ENCODE measurements at regions of chr1 and their contacts with region 1.

Region 1: DNA sequence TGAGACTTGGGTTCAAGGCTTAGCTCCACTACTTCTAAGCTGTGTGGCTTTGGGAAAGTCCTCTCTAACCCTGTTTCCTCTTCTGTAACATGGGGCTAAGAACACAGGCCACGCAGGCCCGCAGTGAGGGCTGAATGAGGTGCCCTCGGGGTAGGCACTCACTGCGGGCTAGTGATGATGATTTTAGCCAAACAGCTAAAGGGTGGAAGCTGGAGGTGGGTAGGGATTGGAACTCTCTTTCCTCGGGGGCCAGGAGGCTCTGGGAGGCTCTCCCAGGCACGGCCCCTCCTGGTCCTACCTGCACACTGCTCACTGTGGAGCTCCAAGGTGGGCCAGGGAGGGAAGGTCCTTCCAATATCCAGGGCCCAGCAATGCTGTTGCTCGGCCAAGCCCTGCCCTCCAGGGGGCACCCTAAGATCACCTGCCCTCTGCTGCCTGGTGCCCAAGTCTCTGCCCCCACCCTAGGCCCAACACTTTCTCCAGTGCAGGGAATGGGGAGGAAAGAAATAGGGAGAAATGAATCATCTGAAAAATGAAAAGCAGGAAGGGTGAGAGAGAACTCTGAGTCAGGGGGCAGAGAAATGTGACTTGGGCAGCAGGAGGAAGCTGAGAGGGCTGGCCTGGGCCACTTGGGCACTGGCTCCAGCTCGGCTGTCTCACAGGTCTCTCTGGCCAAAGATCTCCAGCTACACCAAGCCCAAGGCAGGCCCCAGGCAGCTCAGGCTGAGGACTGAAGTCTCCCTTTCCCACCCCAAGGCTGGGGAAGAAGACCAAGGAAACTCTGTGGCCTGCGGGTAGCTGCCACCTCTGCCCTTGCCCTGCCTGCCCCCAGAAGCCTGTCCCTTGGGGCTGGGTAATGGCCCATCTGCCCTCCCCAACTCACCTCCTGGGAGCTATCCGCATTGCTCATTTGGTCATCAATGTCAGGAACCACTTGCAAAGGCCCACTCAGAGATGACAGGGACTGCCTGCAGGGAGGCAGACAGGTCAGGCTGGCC is 19.3 kb upstream of the EVA1B start:
- DNase-seq: peak; percentile 95
- H3K4me3 ChIP-seq: no peak overlapping the region
- H3K27ac ChIP-seq: peak overlapping the region; percentile 85
- H3K4me1 ChIP-seq: peaks cover 28% of the 10 kb centered on the region
- H3K27me3 ChIP-seq: no peaks in the 10 kb centered on the region
- CTCF ChIP-seq: peak; percentile 88 to 89
- POLR2A ChIP-seq: peak; percentile 49

Region 2: GRCh38 chr1:36223993-36224536 is 118.7 kb before region 1 on chr1 and contains the start of gene THRAP3:
- CTCF ChIA-PET with region 1: no interaction called
- POLR2A ChIA-PET with region 1: no interaction called
- dilution Hi-C with region 1: no loop called
- intact Hi-C with region 1: no loop called
- DNase-seq: peak; percentile 100
- H3K4me3 ChIP-seq: peak within 1 kb of the TSS; percentile 74 to 99 (median 78)
- H3K27ac ChIP-seq: peak within 1 kb of the TSS; percentile 89
- H3K4me1 ChIP-seq: peaks cover 17% of the 10 kb centered on the region
- H3K27me3 ChIP-seq: no peaks in the 10 kb centered on the region
- CTCF ChIP-seq: no peak
- POLR2A ChIP-seq: peak; percentile 93
- total RNA-seq, gene THRAP3: 130 and 144 TPM in 2 replicates

Region 3: DNA sequence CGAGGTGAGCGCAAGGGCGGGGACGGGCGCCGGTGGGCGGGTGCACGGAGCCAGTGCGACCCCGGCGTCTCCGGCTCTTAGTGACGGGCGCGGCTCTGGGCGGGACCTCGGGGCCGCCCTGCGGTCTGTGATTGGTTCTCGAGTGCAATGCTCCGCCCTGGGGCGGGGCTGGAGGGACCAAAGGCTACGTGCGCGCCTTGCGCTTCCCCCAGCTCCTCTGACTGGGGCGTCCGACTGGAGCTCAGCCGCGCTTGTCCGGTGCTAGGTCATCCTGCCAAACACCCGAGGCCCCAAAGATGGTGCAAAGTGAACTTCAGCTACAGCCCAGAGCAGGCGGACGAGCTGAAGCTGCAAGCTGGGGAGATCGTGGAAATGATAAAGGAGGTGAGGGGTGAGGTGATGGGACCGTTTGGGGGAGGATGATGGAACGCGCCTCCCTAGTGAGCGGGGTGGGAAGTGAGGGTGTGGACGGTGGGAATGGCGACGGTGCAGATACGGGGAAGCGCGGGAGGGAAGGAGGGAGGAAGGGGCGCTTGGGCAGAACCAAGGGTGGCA is 35.8 kb before region 1 on chr1:
- CTCF ChIA-PET with region 1: interaction called, 4 read pairs
- POLR2A ChIA-PET with region 1: no interaction called
- dilution Hi-C with region 1: no loop called
- intact Hi-C with region 1: loop called (anchors 1 kb)
- DNase-seq: peak; percentile 97
- H3K4me3 ChIP-seq: peak overlapping the region; percentile 43 to 52 (median 52)
- H3K27ac ChIP-seq: peak overlapping the region; percentile 16
- H3K4me1 ChIP-seq: peaks cover 15% of the 10 kb centered on the region
- H3K27me3 ChIP-seq: no peaks in the 10 kb centered on the region
- CTCF ChIP-seq: no peak
- POLR2A ChIP-seq: peak; percentile 95

Region 4: DNA sequence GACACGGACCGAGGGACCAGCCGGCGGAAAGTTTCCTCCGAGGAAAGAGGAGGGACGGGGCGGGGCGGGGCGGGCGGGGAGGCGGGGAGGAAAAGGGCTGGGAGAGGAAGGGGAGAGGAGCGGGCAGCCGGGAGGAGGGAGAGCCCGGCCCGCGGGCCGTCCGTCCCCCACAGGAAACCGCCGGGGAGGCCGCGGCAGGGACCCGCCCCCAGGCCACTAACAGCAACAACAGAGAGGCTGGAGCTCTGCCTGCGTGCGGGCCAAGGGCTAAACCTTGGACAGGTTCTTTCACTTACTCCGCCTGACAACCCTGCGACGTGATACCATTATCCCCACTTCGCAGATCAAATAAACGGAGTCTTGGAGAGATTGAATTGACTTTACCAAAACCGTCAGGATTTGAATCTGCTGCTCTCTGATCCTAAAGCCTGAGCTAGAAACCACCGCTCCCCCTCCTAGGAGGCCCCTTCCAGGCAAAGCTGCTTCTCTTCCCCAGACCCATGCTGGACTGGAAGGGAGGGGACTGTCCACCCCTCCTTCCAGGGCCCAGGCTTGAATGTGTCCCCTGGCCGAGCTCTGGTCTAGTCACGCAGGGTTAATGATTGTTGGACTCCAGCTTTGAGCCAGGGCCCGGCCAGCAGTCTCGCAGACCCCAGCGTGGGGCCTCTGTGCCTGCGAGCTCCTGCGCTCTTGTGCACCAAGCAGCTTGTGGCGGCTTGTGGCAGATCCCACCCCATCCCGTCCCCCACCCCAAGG is 19.0 kb before region 1 on chr1 and contains the start of gene EVA1B:
- CTCF ChIA-PET with region 1: interaction called, 17 read pairs
- POLR2A ChIA-PET with region 1: no interaction called
- dilution Hi-C with region 1: no loop called
- intact Hi-C with region 1: no loop called
- DNase-seq: peak; percentile 90
- H3K4me3 ChIP-seq: peak within 1 kb of the TSS; percentile 61 to 85 (median 71)
- H3K27ac ChIP-seq: peak within 1 kb of the TSS; percentile 62
- H3K4me1 ChIP-seq: peaks cover 15% of the 10 kb centered on the region
- H3K27me3 ChIP-seq: no peaks in the 10 kb centered on the region
- CTCF ChIP-seq: no peak
- POLR2A ChIP-seq: no peak
- total RNA-seq, gene EVA1B: 63.2 and 64.7 TPM in 2 replicates

Region 5: DNA sequence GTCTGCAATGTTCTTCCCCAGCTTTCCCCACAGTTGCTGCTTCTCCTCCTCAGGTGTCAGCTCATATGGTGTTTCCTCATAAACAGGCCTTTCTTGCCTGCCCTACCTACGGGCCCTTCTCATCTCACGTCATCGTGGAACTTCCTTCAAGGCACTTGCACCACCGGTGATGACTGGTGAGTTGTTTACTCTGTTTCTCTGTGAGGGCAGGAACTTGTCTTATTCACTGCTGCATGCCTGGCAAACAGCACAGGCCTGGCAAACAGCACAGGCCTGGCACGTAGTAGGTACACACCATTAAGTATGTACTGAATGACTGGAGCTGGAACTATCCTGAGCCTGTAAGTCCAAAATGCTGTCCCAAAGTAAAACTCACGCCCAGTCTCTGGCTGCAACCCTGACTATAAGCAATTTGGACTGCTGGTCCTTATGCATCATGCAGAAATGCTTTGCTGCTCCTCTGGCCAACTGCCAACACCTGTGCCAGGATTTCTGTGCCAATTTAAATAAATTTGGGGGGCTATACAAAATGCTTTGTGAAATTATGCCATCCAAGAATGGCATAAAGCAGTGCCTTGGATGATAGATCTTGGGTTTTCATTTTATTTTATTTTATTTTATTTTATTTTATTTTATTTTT is 17.3 kb after region 1 on chr1:
- CTCF ChIA-PET with region 1: interaction called, 152 read pairs
- POLR2A ChIA-PET with region 1: no interaction called
- dilution Hi-C with region 1: no loop called
- intact Hi-C with region 1: no loop called
- DNase-seq: no peak
- H3K4me3 ChIP-seq: no peak overlapping the region
- H3K27ac ChIP-seq: no peak overlapping the region
- H3K4me1 ChIP-seq: no peaks in the 10 kb centered on the region
- H3K27me3 ChIP-seq: no peaks in the 10 kb centered on the region
- CTCF ChIP-seq: no peak
- POLR2A ChIP-seq: no peak

Region 6: GRCh38 chr1:36385410-36386257 is 42.9 kb after region 1 on chr1 and contains the start of gene STK40:
- CTCF ChIA-PET with region 1: interaction called, 55 read pairs
- POLR2A ChIA-PET with region 1: interaction called, 5 read pairs
- dilution Hi-C with region 1: no loop called
- intact Hi-C with region 1: loop called (anchors 1 kb)
- DNase-seq: peak; percentile 99
- H3K4me3 ChIP-seq: peak within 1 kb of the TSS; percentile 80 to 90 (median 83)
- H3K27ac ChIP-seq: peak within 1 kb of the TSS; percentile 97
- H3K4me1 ChIP-seq: peaks cover 24% of the 10 kb centered on the region
- H3K27me3 ChIP-seq: no peaks in the 10 kb centered on the region
- CTCF ChIP-seq: no peak
- POLR2A ChIP-seq: no peak
- total RNA-seq, gene STK40: 35.2 and 36.8 TPM in 2 replicates

Region 7: DNA sequence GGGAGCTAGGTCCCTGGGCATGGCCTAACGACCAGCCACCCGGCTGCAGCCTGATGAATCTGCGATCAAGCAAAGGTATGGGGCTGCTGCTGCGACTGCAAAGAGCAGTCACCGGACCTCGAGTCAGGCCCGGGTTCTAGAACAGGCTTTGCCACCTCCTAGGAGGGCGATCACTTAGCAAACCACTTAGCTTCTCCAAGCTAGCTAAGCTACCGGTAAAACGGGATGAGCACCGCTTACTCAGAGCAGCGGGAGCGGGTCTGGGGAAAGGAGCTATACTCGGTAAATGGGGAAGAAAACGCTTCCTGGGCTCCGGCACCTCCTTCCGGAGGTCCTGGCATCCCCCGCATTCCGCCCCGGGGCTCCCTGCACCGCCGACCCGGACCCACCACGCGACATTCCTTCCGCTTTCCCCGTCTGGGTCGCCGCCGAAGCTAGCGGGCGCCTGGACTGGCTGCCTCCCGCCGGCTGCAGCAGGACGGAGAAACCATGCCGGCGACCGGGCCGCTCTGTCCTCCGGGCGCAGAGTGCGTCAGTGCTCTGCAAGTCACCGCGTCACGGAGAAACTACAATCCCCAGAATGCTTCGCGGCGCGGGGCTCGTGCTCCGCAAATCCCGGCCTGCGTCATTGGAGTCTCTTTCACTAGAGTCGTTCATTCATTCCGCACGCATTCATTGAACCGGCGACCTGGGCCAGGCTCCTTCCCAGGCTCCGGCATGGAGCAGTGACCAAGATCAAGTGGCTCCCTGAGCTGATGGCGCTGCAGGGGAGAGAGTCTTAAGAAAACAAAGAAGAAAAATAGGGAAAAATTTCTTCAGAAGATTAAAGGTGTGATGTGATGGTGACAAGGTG is 54.8 kb after region 1 on chr1 and contains the start of gene LSM10:
- CTCF ChIA-PET with region 1: interaction called, 14 read pairs
- POLR2A ChIA-PET with region 1: no interaction called
- dilution Hi-C with region 1: no loop called
- intact Hi-C with region 1: no loop called
- DNase-seq: peak; percentile 96
- H3K4me3 ChIP-seq: peak within 1 kb of the TSS; percentile 63 to 78 (median 69)
- H3K27ac ChIP-seq: peak within 1 kb of the TSS; percentile 61
- H3K4me1 ChIP-seq: peaks cover 3% of the 10 kb centered on the region
- H3K27me3 ChIP-seq: no peaks in the 10 kb centered on the region
- CTCF ChIP-seq: no peak
- POLR2A ChIP-seq: peak; percentile 91
- total RNA-seq, gene LSM10: 38.2 and 40.3 TPM in 2 replicates

Region 8: DNA sequence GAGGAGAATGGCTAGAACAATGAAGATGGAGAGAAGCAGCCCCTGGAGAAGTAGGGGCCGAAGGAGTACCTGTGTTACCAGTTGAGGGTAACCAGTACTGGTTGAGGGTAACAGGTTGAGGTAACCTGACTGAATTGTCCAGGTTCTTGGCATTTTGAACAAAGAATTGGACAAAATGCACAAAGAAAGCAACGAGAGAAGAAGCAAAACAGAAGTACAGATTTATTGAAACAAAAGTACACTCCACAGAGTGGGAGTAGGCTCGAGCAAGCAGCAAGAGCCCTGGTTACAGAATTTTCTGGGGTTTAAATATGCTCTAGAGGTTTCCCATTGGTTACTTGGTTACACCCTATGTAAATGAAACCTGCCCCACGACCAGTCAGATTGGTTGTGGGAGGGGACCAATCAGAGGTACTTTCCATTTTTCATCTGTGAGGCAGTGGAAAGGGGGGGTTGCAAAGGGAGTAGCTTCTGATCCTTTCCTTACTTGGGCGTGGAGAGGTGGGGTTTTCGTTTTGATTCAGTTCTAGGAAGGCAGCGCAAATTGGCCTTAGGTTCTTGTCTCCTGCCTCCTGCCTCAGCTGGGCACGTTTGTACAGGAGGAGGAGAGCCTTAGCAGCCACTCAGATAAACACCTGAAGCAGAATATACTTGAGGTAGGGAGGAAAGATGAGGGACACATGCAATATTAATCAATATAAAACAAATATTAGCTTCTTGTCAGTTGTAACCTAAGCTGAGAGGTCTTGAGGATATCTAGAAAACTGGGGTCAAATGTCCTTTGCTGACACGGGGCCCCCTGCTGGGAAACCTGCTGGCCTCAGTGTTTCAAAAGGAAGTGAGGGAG is 69.1 kb after region 1 on chr1:
- CTCF ChIA-PET with region 1: interaction called, 70 read pairs
- POLR2A ChIA-PET with region 1: no interaction called
- dilution Hi-C with region 1: no loop called
- intact Hi-C with region 1: no loop called
- DNase-seq: peak; percentile 26
- H3K4me3 ChIP-seq: no peak overlapping the region
- H3K27ac ChIP-seq: no peak overlapping the region
- H3K4me1 ChIP-seq: no peaks in the 10 kb centered on the region
- H3K27me3 ChIP-seq: no peaks in the 10 kb centered on the region
- CTCF ChIP-seq: no peak
- POLR2A ChIP-seq: no peak